PC-3 (cell line): ENCODE measurements at regions of chr4 and their contacts with region 1.

Region 1: GRCh38 chr4:124111922-124112321 is 600.6 kb downstream of the ANKRD50 start:
- DNase-seq: peak; percentile 76
- ATAC-seq: peak; percentile 73
- H3K4me3 ChIP-seq: no peak overlapping the region
- H3K27ac ChIP-seq: no peak overlapping the region
- H3K4me1 ChIP-seq: peaks cover 8% of the 10 kb centered on the region
- H3K27me3 ChIP-seq: no peaks in the 10 kb centered on the region
- CTCF ChIP-seq: peak; percentile 76

Region 2: DNA sequence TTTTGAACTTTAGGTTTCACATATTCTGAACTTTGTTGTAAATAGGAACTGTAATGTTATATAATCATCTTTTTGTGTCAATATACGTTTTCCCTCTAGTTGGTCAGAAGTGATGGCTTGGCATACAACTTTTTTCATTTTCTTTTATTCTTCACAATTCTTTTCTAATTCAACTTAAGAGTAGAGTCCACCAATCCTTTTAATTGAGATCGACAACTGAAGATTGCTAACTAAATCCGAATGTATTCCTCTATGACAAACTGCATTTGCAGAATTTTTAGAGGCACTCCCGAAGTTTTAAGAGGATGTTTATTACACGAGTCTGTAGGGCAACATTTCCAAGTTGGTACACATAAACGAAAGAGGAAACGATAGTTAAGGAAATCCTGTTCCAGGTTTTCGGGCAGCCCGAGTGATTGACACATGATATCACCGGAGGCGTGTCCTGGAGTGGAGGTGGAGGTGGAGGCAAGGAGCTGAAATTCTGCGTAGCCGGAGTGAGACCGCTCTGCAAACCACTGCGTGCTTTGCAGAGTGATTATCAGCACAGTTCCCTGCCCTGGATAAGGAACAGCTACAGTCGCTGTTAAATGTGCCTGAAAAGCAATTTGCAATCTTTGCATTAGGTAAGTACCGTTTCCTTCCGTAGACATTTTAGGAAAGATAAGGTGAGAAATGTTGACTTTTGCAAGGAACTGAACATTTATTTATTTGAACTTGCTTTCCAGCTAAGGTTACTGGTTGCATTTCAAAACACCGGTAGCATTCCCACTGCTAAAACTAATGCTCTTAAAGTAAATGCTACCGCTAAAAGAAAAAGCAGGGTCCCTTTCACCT is 715.4 kb before region 1 on chr4 and contains the start of gene SPRY1:
- CTCF ChIA-PET with region 1: no interaction called
- POLR2A ChIA-PET with region 1: no interaction called
- intact Hi-C with region 1: loop called (anchors 2 kb)
- DNase-seq: peak; percentile 92
- ATAC-seq: peak; percentile 73
- H3K4me3 ChIP-seq: peak within 1 kb of the TSS; percentile 83
- H3K27ac ChIP-seq: peak within 1 kb of the TSS; percentile 72
- H3K4me1 ChIP-seq: peaks cover 4% of the 10 kb centered on the region; the same call in 1 of the 2 replicates
- H3K27me3 ChIP-seq: no peaks in the 10 kb centered on the region
- CTCF ChIP-seq: no peak
- total RNA-seq, gene SPRY1: 26.4 and 30.6 TPM in 2 replicates

Region 3: GRCh38 chr4:123776254-123776653 is 335.7 kb before region 1 on chr4:
- CTCF ChIA-PET with region 1: no interaction called
- POLR2A ChIA-PET with region 1: no interaction called
- intact Hi-C with region 1: loop called (anchors 1 kb)
- DNase-seq: no peak
- ATAC-seq: no peak
- H3K4me3 ChIP-seq: no peak overlapping the region
- H3K27ac ChIP-seq: no peak overlapping the region
- H3K4me1 ChIP-seq: no peaks in the 10 kb centered on the region
- H3K27me3 ChIP-seq: no peaks in the 10 kb centered on the region
- CTCF ChIP-seq: no peak

Region 4: DNA sequence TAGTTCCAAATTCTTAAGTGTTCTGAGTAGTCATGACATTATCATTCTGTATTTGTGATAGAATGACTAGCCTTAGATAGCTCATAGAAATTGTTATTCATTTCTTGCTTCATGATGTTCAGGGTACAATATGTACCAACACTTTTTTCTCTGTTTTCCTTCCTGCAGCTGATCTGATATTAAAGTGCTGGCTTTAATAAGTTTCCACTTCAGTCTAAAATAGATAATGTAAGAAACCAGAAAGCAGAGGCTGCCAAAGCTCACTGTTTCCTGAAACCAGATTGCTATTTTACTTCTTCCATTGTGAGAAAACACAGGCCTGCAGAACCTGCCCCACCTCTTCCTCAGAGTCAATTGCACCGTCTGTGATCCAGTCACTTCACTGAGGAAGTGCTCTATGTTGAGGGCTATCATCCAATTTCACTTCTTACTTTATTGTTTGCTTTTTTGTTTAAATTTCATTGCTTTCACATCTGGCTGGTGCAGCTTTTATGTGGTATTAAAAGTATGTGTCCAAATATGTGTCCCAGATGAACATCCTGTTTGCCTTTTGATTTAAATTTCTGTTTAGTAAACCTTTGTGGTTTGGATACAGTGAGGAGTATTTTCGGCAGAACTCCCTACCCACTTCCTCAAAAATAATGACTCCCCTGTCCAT is 51.5 kb before region 1 on chr4:
- CTCF ChIA-PET with region 1: no interaction called
- POLR2A ChIA-PET with region 1: no interaction called
- intact Hi-C with region 1: loop called (anchors 5 kb)
- DNase-seq: peak; percentile 64
- ATAC-seq: peak; percentile 96
- H3K4me3 ChIP-seq: peak overlapping the region; percentile 19
- H3K27ac ChIP-seq: no peak overlapping the region; the same call in 1 of the 2 replicates
- H3K4me1 ChIP-seq: peaks cover 17% of the 10 kb centered on the region
- H3K27me3 ChIP-seq: no peaks in the 10 kb centered on the region
- CTCF ChIP-seq: no peak

Region 5: GRCh38 chr4:124262211-124263179 is 150.6 kb after region 1 on chr4:
- CTCF ChIA-PET with region 1: no interaction called
- POLR2A ChIA-PET with region 1: no interaction called
- intact Hi-C with region 1: loop called (anchors 1 kb)
- DNase-seq: peak; percentile 87
- ATAC-seq: peak; percentile 98
- H3K4me3 ChIP-seq: no peak overlapping the region; the same call in 1 of the 2 replicates
- H3K27ac ChIP-seq: no peak overlapping the region
- H3K4me1 ChIP-seq: peaks cover 8% of the 10 kb centered on the region
- H3K27me3 ChIP-seq: no peaks in the 10 kb centered on the region
- CTCF ChIP-seq: peak; percentile 87